ENCODE measurements at regions of chr19 and their contacts with region 1.

Region 1: GRCh38 chr19:57279418-57280066 is 743 bp upstream of the ZNF460 start:
- DNase-seq: peak; percentile 93
- H3K4me3 ChIP-seq: peak overlapping the region; percentile 21 to 77 (median 72)
- H3K27ac ChIP-seq: peak overlapping the region; percentile 90
- H3K4me1 ChIP-seq: peaks cover 20% of the 10 kb centered on the region
- H3K27me3 ChIP-seq: no peaks in the 10 kb centered on the region
- CTCF ChIP-seq: peak in 1 of 2 donors; percentile 26
- POLR2A ChIP-seq: peak; percentile 72

Region 2: DNA sequence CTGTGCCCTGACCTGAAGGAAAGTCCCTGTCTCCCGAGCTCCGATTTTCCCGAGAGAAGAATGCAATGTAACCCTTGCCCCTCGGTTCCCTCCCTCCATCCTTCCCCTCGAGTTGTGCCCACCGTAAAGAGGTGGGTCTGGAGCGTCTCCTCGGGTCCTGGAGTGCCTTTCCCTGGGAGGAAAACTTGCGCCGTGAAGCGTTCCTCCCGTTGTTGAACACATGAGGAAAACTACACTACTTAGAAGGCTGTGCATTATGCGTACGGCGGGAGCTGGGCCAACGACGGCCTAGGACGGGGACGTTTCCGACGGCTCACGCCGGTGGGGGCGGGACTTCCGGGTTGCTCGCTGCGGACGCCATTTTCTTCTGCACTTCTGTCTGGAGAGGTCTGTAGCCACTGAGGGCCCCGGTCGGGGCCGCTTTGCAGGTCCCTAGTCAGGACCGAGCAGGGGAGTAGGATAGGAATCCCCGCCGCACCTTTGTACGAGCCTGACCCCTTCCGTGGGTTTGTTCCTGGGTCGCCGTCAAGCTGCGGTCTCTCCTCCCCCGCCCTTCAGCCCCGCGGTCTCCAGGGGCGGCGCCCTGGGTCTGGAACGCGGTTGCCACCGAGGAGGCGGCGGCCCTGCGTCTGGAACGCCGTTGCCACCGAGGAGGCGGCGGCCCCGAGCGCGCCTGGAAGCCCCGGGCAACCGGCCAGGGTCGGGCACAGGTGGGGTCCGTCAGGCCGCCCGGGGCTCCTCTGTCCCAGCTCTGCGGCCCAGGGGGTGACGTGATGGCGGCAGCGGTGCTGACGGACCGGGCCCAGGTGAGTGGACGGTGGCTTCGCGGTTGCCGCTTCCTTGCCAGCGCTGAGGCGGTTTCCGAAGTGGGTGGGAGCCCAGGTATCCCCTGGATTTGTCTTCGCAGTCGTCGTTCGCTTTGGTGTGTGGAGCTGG is 88.1 kb before region 1 on chr19 and contains the start of gene ZNF264:
- CTCF ChIA-PET with region 1: no interaction called
- POLR2A ChIA-PET with region 1: no interaction called
- dilution Hi-C with region 1: no loop called
- intact Hi-C with region 1: loop called (anchors 1 kb)
- DNase-seq: peak; percentile 90
- H3K4me3 ChIP-seq: peak within 1 kb of the TSS; percentile 22 to 80 (median 77)
- H3K27ac ChIP-seq: peak within 1 kb of the TSS; percentile 40
- H3K4me1 ChIP-seq: peaks cover 3% of the 10 kb centered on the region
- H3K27me3 ChIP-seq: no peaks in the 10 kb centered on the region
- CTCF ChIP-seq: no peak
- POLR2A ChIP-seq: peak; percentile 87
- total RNA-seq, gene ZNF264: 18.2 and 20.5 TPM in 2 replicates

Region 3: GRCh38 chr19:57240311-57241090 is 39.0 kb before region 1 on chr19 and contains the start of gene ZNF805:
- CTCF ChIA-PET with region 1: no interaction called
- POLR2A ChIA-PET with region 1: no interaction called
- dilution Hi-C with region 1: no loop called
- intact Hi-C with region 1: loop called (anchors 1 kb)
- DNase-seq: peak; percentile 95
- H3K4me3 ChIP-seq: peak within 1 kb of the TSS; percentile 93 to 99 (median 96)
- H3K27ac ChIP-seq: peak within 1 kb of the TSS; percentile 66
- H3K4me1 ChIP-seq: peaks cover 6% of the 10 kb centered on the region
- H3K27me3 ChIP-seq: no peaks in the 10 kb centered on the region
- CTCF ChIP-seq: no peak
- POLR2A ChIP-seq: peak; percentile 44
- total RNA-seq, gene ZNF805: 8.6 and 8.7 TPM in 2 replicates

Region 4: DNA sequence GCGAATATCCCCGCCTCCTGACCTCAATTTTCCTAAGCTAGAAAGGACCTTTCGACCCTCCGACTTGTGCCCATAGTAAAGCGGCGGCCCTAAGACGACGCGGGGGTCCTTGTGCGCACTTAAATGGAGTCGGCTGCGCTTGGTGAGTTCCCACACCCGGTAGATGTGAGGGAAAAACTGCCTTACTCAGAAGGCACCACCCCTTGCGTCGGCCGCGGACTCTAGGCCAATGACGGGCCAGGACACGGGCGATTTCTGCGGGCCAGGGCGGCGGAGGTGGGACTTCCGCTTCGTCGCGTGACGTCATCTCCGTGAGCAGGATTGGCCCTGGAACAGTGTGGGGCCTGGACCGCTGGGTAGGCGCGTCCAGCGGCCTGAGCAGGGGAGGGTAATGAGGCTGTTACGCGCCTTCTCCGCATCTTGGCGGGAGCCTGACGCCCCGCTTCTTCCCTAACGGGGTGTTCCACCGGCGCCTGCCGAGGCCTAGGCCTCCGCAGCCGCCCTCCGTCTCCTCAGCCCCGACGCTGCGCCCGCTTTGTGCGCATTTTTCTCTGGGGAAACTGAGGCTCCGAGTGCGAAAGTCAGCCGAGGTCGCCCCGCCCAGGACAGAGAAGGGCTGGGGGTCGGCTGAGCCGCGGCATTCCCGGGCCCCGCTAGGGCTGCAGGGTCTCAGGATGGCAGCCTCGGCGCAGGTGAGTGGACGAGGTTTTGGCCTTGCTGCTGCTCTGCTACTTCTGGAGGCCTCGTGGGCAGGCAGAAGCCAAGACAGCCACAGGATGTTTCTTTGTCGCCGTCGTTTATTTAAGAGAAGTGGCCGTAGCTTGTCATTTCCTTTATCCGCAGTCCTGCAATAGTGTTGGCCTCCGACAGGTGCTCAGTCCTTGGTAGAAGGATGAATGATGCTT is 40.9 kb after region 1 on chr19 and contains the start of gene ZNF543:
- CTCF ChIA-PET with region 1: no interaction called
- POLR2A ChIA-PET with region 1: no interaction called
- dilution Hi-C with region 1: no loop called
- intact Hi-C with region 1: loop called (anchors 5 kb)
- DNase-seq: peak; percentile 96
- H3K4me3 ChIP-seq: peak within 1 kb of the TSS; percentile 52 to 70 (median 65)
- H3K27ac ChIP-seq: peak within 1 kb of the TSS; percentile 72
- H3K4me1 ChIP-seq: peaks cover 6% of the 10 kb centered on the region
- H3K27me3 ChIP-seq: peaks cover 13 to 24% of the 10 kb centered on the region in 2 experiments
- CTCF ChIP-seq: no peak
- POLR2A ChIP-seq: peak; percentile 79
- total RNA-seq, gene ZNF543: 4.5 and 5.3 TPM in 2 replicates

Region 5: DNA sequence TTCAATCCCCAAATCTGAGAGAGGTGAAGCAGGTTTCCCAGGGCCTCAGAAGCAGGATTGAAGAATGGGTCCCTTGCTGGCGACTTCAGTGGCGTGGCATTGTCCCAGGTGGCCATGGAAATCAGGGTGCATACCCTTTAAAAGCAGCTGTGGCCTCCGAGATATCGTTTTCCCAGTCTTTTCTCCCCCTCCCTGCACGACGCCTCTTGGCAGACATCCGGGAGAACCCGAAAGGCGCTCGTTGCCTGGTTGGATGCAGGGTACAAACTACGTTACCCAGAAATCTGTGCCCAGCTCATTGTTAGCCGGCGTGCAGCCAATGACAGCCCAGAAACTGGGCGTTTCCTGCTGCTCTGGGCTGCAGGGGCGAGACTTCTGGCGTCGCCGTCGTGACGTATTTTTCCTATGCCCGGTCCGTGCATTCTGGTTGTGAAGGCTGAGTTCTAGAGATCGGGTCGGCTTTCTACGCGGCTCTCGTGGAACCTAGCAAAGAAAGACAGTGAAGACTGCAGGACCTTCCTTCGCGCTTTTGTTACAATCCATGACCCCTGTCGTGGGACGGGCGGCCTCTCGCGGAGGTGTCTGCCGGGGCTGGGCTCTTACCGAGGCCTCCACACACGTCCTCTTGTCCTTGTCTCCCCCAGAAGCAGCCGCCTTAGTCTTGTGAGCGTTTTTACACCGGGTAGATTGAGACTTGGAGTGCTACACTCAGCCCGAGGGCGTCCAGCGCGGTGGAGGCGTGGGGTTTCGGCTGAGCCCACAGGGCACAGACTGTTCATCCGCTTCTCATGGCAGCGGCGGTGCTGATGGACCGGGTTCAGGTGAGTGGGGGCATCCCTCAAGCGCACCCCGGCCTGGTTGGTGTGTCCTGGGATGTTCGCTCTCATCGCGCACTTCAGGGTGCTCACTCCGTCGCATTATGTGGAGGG is 71.6 kb after region 1 on chr19 and contains the start of gene ZNF304:
- CTCF ChIA-PET with region 1: no interaction called
- POLR2A ChIA-PET with region 1: no interaction called
- dilution Hi-C with region 1: no loop called
- intact Hi-C with region 1: loop called (anchors 1 kb)
- DNase-seq: peak; percentile 95
- H3K4me3 ChIP-seq: peak within 1 kb of the TSS; percentile 42 to 73 (median 64)
- H3K27ac ChIP-seq: peak within 1 kb of the TSS; percentile 23
- H3K4me1 ChIP-seq: peaks cover 8% of the 10 kb centered on the region
- H3K27me3 ChIP-seq: no peaks in the 10 kb centered on the region
- CTCF ChIP-seq: no peak
- POLR2A ChIP-seq: peak; percentile 73
- total RNA-seq, gene ZNF304: 5.3 and 5.6 TPM in 2 replicates

Region 6: GRCh38 chr19:57362997-57363705 is 83.6 kb after region 1 on chr19 and contains the starts of genes TRAPPC2B and ZNF547:
- CTCF ChIA-PET with region 1: no interaction called
- POLR2A ChIA-PET with region 1: no interaction called
- dilution Hi-C with region 1: no loop called
- intact Hi-C with region 1: loop called (anchors 1 kb)
- DNase-seq: peak; percentile 100
- H3K4me3 ChIP-seq: peak within 1 kb of the TSS; percentile 47 to 92 (median 74)
- H3K27ac ChIP-seq: peak within 1 kb of the TSS; percentile 27
- H3K4me1 ChIP-seq: peaks cover 8% of the 10 kb centered on the region
- H3K27me3 ChIP-seq: no peaks in the 10 kb centered on the region
- CTCF ChIP-seq: no peak
- POLR2A ChIP-seq: peak; percentile 70
- total RNA-seq, gene TRAPPC2B: 6.3 and 7.5 TPM in 2 replicates
- total RNA-seq, gene ZNF547: 2.7 and 3.2 TPM in 2 replicates

Measured in endothelial cell of umbilical vein (primary cell).